ENCODE measurements at regions of chr20 and their contacts with region 1.

Region 1: GRCh38 chr20:49219089-49219923 is at the start of gene DDX27:
- DNase-seq: peak; percentile 93
- H3K4me3 ChIP-seq: peak within 1 kb of the TSS; percentile 84
- H3K27me3 ChIP-seq: no peaks in the 10 kb centered on the region
- CTCF ChIP-seq: no peak
- polyA plus RNA-seq, gene DDX27: 26.3 and 31.9 TPM in 2 replicates

Region 2: DNA sequence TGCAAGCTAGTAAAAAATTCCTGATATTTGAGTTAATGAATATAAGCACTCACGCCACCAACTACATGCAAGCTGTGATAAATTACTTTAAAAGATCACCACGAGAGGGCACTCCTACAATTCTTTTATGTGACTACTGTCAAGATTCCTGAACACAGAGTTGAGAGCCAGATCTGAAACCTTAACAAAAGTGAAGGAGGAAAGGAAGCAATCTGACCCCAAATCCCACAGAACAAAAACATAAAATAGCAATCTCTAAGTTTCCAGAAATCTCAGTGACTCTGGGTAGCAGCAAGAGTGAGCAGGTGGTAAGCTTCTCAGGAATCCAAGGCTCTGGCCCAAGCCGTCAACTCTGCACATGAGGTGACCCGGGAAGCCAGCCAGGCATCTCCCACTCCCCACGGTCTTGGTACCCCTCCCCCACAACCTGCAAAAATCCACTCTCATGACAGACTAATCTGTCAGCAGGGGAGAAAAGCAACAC is 86.3 kb before region 1 on chr20:
- CTCF ChIA-PET with region 1: interaction called, 137 read pairs
- POLR2A ChIA-PET with region 1: no interaction called
- DNase-seq: peak; percentile 24
- H3K4me3 ChIP-seq: no peak overlapping the region
- H3K27me3 ChIP-seq: no peaks in the 10 kb centered on the region
- CTCF ChIP-seq: peak; percentile 46

Region 3: GRCh38 chr20:49151436-49151835 is 67.9 kb before region 1 on chr20:
- CTCF ChIA-PET with region 1: interaction called, 16 read pairs
- POLR2A ChIA-PET with region 1: interaction called, 3 read pairs
- DNase-seq: no peak
- H3K4me3 ChIP-seq: no peak overlapping the region
- H3K27me3 ChIP-seq: no peaks in the 10 kb centered on the region
- CTCF ChIP-seq: no peak

Region 4: DNA sequence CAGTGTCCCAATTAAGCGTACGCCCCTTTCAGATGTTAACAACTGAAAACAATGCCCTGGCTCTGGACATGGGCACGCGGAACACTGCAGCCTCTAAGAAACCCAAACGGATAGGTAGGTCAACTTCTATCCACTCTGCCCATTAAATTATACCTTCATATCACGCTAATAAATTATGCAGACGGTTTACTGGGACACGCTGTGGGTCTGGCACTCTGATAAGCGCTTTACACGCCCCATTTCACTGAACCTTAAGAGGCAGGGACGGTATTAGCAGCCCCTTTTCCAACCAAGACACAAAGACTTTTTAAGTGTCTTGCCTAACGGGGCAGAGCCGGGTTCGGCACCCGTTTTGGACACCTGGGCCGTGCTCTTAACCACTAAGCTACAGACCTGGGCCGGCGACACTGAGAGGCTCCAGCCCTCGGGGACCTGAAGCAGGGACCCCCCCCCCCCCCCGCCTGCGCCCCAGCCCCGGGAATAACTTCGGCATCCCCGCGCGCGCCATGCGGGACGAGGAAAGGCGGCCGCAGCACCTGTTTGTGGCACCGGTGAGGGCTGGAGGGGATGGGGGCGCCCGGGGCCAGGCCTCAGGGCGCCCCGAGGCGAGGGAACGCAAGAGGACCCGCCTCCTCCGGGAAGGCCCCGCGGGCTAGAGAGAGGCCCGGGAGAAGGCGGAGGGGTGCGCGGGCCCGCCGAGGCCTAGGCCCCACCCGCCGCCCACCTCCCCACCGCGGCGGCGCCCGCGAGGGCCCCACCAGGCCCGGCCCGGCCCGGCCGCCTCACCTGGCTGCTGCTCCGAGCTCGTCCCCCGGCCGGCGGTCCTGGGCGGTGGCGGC is 31.8 kb before region 1 on chr20:
- CTCF ChIA-PET with region 1: interaction called, 8 read pairs
- POLR2A ChIA-PET with region 1: interaction called, 22 read pairs
- DNase-seq: no peak
- H3K4me3 ChIP-seq: peak overlapping the region; percentile 55
- H3K27me3 ChIP-seq: no peaks in the 10 kb centered on the region
- CTCF ChIP-seq: no peak

Region 5: DNA sequence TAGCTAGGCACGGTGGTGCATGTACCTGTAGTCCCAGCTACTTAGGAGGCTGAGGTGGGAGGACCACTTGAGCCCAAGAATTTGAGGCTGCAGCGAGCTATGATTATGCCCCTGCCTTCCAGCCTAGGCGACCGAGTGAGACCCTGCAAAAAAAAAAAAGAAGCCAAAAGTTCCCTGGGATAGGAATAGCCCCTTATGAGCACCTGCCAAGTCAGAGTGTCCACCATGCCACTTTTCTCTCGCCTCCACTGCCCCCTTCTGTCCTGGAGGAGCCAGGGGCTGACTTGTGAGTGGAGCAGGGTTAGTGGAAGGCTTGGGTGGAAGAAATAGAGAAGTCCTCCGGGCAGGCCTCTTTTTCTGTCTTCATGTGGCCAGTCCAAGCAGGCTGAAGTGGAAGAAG is 12.2 kb before region 1 on chr20:
- CTCF ChIA-PET with region 1: interaction called, 11 read pairs
- POLR2A ChIA-PET with region 1: no interaction called
- DNase-seq: no peak
- H3K4me3 ChIP-seq: no peak overlapping the region
- H3K27me3 ChIP-seq: no peaks in the 10 kb centered on the region
- CTCF ChIP-seq: no peak

Region 6: GRCh38 chr20:49297605-49298530 is 78.6 kb after region 1 on chr20:
- CTCF ChIA-PET with region 1: no interaction called
- POLR2A ChIA-PET with region 1: no interaction called
- DNase-seq: no peak
- H3K4me3 ChIP-seq: no peak overlapping the region
- H3K27me3 ChIP-seq: no peaks in the 10 kb centered on the region
- CTCF ChIP-seq: no peak

Measured in BJ (cell line).